Right cardiac atrium (tissue), 5 donors: ENCODE measurements at regions of chr13 and their contacts with region 1.

Region 1: DNA sequence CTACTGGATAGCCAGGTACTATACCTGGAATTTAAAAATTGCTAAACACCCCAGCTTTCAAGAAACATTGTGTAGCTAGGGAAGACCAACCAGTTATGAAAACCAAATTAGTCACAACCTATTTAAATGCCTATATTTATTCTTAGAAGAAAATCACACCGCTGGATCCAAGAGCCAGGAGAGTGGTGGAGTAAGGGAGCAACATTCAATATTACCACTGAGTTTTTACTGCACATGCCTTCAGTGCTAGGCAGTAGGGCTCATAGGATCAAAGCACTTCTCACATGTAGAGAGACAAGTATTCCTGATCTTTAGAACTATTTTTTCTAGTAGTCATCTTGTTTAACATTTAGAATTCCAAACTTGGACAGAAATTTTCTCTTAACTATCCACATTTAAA is 11.2 kb downstream of the ITM2B start:
- DNase-seq: no peak
- ATAC-seq: peak in 1 of 2 donors; percentile 54
- H3K4me3 ChIP-seq: no peak overlapping the region
- H3K27ac ChIP-seq: no peak overlapping the region
- H3K4me1 ChIP-seq: no peaks in the 10 kb centered on the region
- H3K27me3 ChIP-seq: no peaks in the 10 kb centered on the region

Region 2: DNA sequence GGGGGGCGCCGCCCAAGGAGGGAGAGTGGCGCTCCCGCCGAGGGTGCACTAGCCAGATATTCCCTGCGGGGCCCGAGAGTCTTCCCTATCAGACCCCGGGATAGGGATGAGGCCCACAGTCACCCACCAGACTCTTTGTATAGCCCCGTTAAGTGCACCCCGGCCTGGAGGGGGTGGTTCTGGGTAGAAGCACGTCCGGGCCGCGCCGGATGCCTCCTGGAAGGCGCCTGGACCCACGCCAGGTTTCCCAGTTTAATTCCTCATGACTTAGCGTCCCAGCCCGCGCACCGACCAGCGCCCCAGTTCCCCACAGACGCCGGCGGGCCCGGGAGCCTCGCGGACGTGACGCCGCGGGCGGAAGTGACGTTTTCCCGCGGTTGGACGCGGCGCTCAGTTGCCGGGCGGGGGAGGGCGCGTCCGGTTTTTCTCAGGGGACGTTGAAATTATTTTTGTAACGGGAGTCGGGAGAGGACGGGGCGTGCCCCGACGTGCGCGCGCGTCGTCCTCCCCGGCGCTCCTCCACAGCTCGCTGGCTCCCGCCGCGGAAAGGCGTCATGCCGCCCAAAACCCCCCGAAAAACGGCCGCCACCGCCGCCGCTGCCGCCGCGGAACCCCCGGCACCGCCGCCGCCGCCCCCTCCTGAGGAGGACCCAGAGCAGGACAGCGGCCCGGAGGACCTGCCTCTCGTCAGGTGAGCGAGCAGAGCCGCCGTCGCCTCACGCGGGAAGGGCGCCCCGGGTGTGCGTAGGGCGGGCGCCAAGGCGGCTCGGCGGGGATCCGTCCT is 59.4 kb after region 1 on chr13 and contains the start of gene RB1:
- intact Hi-C with region 1: loop called in 3 of 4 experiments (anchors 10 kb)
- DNase-seq: peak; percentile 97 to 98 (median 97)
- ATAC-seq: peak; percentile 97
- H3K4me3 ChIP-seq: peak within 1 kb of the TSS; percentile 82
- H3K27ac ChIP-seq: peak within 1 kb of the TSS; percentile 98
- H3K4me1 ChIP-seq: peaks cover 3% of the 10 kb centered on the region
- H3K27me3 ChIP-seq: no peaks in the 10 kb centered on the region
- total RNA-seq, gene RB1: 21.8 to 29.0 (median 27.3) TPM